GM12878 (cell line): ENCODE measurements at regions of chr6 and their contacts with region 1.

Region 1: GRCh38 chr6:157873735-157874344 is 50.8 kb downstream of the SNX9 start:
- DNase-seq: peak; percentile 16
- ATAC-seq: peak; percentile 99
- H3K4me3 ChIP-seq: no peak overlapping the region
- H3K27ac ChIP-seq: no peak overlapping the region
- H3K4me1 ChIP-seq: peaks cover 3% of the 10 kb centered on the region; the same call in 1 of the 2 replicates
- H3K27me3 ChIP-seq: peaks cover 0 to 2% of the 10 kb centered on the region in 2 experiments; a peak in 2 of 4 replicates
- CTCF ChIP-seq: peak; percentile 82 to 91 (median 84)
- EP300 ChIP-seq: no peak
- POLR2A ChIP-seq: no peak
- RAD21 ChIP-seq: peak; percentile 86

Region 2: DNA sequence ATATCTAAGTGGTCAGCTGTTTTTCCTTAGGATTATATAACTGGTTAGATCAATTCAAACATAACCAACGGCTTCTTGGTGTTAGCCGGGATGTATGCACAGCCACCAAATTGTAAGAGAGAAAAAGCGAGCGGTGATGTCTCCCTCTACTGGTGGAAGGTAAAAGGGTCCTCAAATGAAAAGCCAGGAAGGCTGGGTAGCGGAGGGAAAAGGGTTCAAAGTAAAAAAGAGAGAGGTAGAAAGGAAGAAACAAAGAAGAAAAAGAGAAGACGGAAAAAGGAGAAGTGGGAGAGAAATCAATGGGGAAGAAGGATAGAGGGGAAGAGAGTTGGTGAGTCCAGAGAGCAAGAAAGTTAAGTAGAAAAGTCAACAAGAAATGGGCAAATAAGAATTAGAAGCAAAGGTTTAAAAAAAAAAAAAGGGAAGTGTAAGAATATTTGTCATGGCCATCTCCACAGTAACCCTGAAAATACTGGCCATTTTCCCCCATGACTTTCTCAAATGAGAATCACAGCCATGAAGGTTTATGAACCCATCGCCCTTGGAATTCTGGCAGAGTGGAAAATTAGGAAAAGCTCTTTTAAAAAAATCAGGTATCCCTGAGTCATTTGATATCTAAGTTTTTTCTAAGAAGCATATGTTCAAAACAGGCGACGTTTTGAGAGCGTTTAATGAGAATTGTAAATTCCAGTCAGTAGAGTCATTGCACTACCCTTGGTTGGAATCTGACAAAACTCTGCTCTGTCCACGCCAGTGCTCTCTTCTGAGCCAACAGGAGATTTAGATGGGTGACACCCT is 206.4 kb before region 1 on chr6:
- CTCF ChIA-PET with region 1: interaction called, 37 read pairs
- POLR2A ChIA-PET with region 1: no interaction called
- RAD21 ChIA-PET with region 1: interaction called, 9 read pairs
- SMC1A ChIA-PET with region 1: interaction called, 10 read pairs
- in situ Hi-C with region 1: no loop called
- intact Hi-C with region 1: no loop called
- DNase-seq: peak; percentile 36
- ATAC-seq: peak; percentile 94
- H3K4me3 ChIP-seq: no peak overlapping the region
- H3K27ac ChIP-seq: no peak overlapping the region
- H3K4me1 ChIP-seq: no peaks in the 10 kb centered on the region
- H3K27me3 ChIP-seq: 0 out of 4 replicates have a peak, but pooled peaks cover 0 to 2% of the 10 kb centered on the region in 2 experiments
- CTCF ChIP-seq: peak; percentile 74 to 81 (median 79)
- EP300 ChIP-seq: no peak
- POLR2A ChIP-seq: no peak
- RAD21 ChIP-seq: peak; percentile 95

Region 3: GRCh38 chr6:157764178-157765033 is 109.4 kb before region 1 on chr6:
- CTCF ChIA-PET with region 1: interaction called, 197 read pairs
- POLR2A ChIA-PET with region 1: no interaction called
- RAD21 ChIA-PET with region 1: interaction called, 105 read pairs
- SMC1A ChIA-PET with region 1: interaction called, 208 read pairs
- in situ Hi-C with region 1: loop called (anchors 5 kb)
- intact Hi-C with region 1: no loop called
- DNase-seq: peak; percentile 95
- ATAC-seq: peak; percentile 68
- H3K4me3 ChIP-seq: peak overlapping the region; percentile 53; the same call in 1 of the 2 replicates
- H3K27ac ChIP-seq: peak overlapping the region; percentile 76
- H3K4me1 ChIP-seq: peaks cover 72% of the 10 kb centered on the region
- H3K27me3 ChIP-seq: no peaks in the 10 kb centered on the region
- CTCF ChIP-seq: no peak
- EP300 ChIP-seq: peak; percentile 96 to 97
- POLR2A ChIP-seq: no peak
- RAD21 ChIP-seq: 0 out of 2 replicates have a peak, but pooled peaks have one; percentile 2

Region 4: DNA sequence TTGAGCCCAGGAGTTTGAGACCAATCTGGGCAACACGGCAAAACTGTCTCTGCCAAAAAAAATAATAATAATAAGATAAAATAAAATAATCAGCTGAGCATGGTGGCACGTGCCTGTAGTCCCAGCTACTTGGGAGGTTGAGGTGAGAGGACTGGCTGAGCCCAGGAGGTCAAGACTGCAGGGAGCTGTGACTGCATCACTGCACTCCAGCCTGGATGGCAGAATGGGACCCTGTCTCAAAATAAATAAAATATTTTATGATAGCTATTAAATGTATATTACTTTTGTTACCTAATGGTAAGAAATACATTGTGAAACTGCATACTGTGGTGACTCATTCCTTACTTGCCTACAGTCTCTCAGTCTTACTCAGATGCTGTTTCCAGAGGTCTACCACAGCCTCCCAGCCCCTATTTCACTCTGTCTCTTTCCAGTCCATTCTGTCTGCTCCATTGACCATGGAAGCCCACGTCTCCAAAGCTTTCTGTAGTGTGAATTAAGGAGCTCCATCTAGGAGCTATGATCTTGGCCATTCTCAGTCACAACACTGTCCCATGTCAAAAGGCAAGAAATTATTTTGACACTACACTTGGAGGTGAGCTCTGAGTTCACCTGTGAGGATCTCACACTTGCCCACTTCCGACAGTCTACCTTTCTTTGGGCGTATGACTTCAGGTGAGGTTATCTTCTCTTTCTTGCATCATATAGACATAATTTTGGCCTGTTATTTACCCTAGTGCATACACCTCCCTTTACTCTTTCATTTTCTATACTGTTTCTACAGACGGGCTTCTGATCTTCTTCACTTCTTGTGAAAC is 73.2 kb before region 1 on chr6:
- CTCF ChIA-PET with region 1: no interaction called
- POLR2A ChIA-PET with region 1: no interaction called
- RAD21 ChIA-PET with region 1: interaction called, 9 read pairs
- SMC1A ChIA-PET with region 1: interaction called, 10 read pairs
- in situ Hi-C with region 1: no loop called
- intact Hi-C with region 1: no loop called
- DNase-seq: peak; percentile 76
- ATAC-seq: peak; percentile 98
- H3K4me3 ChIP-seq: peak overlapping the region; percentile 37; the same call in 1 of the 2 replicates
- H3K27ac ChIP-seq: 0 out of 2 replicates have a peak overlapping the region, but pooled peaks have one; percentile 32
- H3K4me1 ChIP-seq: peaks cover 23% of the 10 kb centered on the region
- H3K27me3 ChIP-seq: peaks cover 0 to 2% of the 10 kb centered on the region in 2 experiments; a peak in 3 of 4 replicates
- CTCF ChIP-seq: no peak
- EP300 ChIP-seq: peak; percentile 39 to 94
- POLR2A ChIP-seq: no peak
- RAD21 ChIP-seq: no peak

Region 5: DNA sequence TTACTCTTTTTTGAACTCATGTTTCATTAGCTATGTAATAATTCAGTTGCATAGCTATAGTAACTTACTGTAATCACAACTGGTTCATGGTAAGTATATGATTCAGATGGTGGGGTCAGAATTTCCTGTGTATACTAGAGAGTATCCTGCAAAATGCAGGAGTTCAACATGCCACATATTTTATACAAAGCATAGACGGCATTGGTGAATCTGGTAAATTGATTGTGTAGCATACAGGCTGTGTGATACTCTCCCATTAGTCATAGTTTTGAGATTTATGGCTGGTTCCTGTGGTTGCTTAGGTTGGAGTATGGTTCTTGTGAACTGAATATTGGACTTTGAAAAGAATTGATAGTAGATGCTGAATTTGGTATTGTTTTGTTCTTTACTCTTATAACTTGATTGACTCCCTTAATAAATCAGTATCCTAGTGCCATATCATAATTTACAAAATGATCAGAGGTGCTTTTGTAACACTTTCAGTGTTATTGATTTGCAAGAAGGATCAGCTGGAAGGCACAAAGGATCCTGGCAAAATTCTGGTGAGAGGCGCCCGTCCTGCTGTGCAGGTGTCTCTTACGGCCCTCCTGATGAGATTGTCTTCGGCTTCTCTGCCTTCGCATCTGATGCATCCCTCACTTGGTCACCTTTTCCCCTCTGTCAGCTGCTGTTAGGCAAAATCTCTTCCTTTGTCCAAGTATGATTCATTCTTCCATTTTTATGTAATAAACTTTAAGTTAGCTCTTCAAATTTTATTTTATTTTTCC is 28.2 kb before region 1 on chr6:
- CTCF ChIA-PET with region 1: interaction called, 6 read pairs
- POLR2A ChIA-PET with region 1: interaction called, 3 read pairs
- RAD21 ChIA-PET with region 1: interaction called, 11 read pairs
- SMC1A ChIA-PET with region 1: interaction called, 14 read pairs
- in situ Hi-C with region 1: no loop called
- intact Hi-C with region 1: no loop called
- DNase-seq: no peak
- ATAC-seq: no peak; the same call in 2 of the 3 replicates
- H3K4me3 ChIP-seq: no peak overlapping the region
- H3K27ac ChIP-seq: no peak overlapping the region
- H3K4me1 ChIP-seq: peaks cover 21% of the 10 kb centered on the region
- H3K27me3 ChIP-seq: no peaks in the 10 kb centered on the region; a peak in 1 of 4 replicates
- CTCF ChIP-seq: no peak
- EP300 ChIP-seq: no peak
- POLR2A ChIP-seq: no peak
- RAD21 ChIP-seq: no peak

Region 6: DNA sequence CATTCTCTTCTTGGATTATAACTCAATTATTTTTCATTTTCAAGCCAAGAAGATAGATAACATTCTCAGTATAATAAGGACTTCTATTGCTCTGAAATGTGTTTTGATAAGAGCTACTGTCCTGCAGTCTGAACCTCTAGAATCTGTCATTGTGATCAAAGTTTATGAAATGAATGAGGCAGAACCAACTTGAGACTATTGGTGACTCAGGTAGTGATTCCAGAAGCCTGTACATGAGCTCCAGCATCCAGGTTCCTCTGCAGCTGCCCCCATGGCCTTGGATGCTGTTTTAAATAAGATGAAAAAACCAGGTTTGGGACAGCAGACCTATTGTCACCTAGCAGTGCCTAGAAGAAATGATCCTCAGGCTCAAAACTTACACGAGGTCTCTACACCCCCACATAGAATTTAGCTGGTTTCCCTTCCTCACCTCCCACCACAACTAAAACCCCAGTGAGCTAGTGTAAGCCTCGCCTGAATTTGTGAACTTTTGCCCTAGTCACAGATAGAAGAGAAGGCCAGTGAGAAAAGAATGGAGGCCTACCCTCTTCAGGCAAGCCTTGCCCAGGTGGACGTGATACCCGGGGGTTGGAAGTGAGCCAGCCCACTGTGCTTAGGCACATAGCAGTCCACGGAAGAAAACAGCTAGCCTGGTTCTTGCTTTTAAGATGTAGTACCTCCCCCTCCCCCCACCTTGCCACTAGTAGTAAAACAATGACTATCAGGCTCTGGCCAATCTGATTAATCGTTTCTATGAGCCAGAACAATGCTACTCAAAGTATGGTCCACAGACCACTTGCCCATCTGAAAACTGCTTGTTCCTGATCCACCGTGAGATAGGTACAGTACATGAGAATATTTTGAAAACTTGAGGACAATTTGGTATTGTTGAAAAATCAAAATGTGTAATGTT is 34.8 kb after region 1 on chr6:
- CTCF ChIA-PET with region 1: interaction called, 6 read pairs
- POLR2A ChIA-PET with region 1: no interaction called
- RAD21 ChIA-PET with region 1: interaction called, 5 read pairs
- SMC1A ChIA-PET with region 1: interaction called, 16 read pairs
- in situ Hi-C with region 1: no loop called
- intact Hi-C with region 1: no loop called
- DNase-seq: peak; percentile 42
- ATAC-seq: peak; percentile 78
- H3K4me3 ChIP-seq: no peak overlapping the region
- H3K27ac ChIP-seq: peak overlapping the region; percentile 11; the same call in 1 of the 2 replicates
- H3K4me1 ChIP-seq: peaks cover 17% of the 10 kb centered on the region
- H3K27me3 ChIP-seq: no peaks in the 10 kb centered on the region
- CTCF ChIP-seq: no peak
- EP300 ChIP-seq: 0 out of 4 replicates have a peak, but pooled peaks of 1 of the 2 experiments have one; percentile 37
- POLR2A ChIP-seq: no peak
- RAD21 ChIP-seq: no peak